Caco-2 (cell line): ENCODE measurements at regions of chr9 and their contacts with region 1.

Region 1: GRCh38 chr9:133782157-133783130 is 44.3 kb upstream of the SARDH start:
- DNase-seq: peak; percentile 70 to 81
- H3K4me3 ChIP-seq: no peak overlapping the region
- H3K4me3 Mint-ChIP-seq: no peak overlapping the region
- H3K27ac Mint-ChIP-seq: no peak overlapping the region
- H3K4me1 ChIP-seq: peaks cover 9% of the 10 kb centered on the region
- H3K4me1 Mint-ChIP-seq: no peaks in the 10 kb centered on the region
- H3K27me3 ChIP-seq: no peaks in the 10 kb centered on the region
- H3K27me3 Mint-ChIP-seq: no peaks in the 10 kb centered on the region
- CTCF ChIP-seq: peak; percentile 83

Region 2: DNA sequence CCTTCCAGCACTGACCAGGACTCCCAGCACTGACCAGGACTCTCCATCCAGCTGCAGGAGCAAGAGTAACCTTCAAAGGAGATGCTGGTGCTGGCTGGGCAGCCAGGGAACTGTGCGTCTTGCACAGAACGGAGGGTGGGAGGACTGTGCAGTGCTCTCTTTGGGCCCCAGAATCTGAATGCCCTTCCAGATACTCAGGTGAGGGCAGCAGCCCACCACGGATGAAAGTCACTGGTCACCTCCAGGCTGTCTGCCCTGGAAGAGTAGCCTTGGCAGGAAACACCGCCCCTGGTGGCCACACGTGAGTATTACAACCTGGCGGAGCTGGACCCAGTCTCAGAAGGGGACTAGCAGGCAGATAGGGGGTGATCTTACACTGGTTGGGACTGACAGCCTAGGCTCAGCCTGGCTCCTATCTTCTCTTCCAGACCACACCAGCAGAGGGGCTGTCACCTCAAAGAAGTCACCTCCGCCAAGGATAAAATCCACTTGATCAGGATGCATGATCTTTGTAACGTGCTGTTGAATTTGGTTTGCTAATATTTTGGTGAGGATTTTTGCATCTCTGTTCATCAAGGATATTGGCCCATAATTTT is 39.5 kb before region 1 on chr9:
- CTCF ChIA-PET with region 1: interaction called, 10 read pairs
- POLR2A ChIA-PET with region 1: no interaction called
- intact Hi-C with region 1: no loop called
- DNase-seq: peak; percentile 88 to 91
- H3K4me3 ChIP-seq: no peak overlapping the region
- H3K4me3 Mint-ChIP-seq: no peak overlapping the region
- H3K27ac Mint-ChIP-seq: no peak overlapping the region
- H3K4me1 ChIP-seq: peaks cover 13% of the 10 kb centered on the region
- H3K4me1 Mint-ChIP-seq: peaks cover 9% of the 10 kb centered on the region
- H3K27me3 ChIP-seq: no peaks in the 10 kb centered on the region
- H3K27me3 Mint-ChIP-seq: no peaks in the 10 kb centered on the region
- CTCF ChIP-seq: peak; percentile 95 to 98